AG04449 (cell line): ENCODE measurements at regions of chr5 and their contacts with region 1.

Region 1: GRCh38 chr5:135466178-135467050 is 14.3 kb upstream of the TIFAB start:
- DNase-seq: no peak
- H3K4me3 ChIP-seq: no peak overlapping the region
- CTCF ChIP-seq: peak; percentile 96

Region 2: DNA sequence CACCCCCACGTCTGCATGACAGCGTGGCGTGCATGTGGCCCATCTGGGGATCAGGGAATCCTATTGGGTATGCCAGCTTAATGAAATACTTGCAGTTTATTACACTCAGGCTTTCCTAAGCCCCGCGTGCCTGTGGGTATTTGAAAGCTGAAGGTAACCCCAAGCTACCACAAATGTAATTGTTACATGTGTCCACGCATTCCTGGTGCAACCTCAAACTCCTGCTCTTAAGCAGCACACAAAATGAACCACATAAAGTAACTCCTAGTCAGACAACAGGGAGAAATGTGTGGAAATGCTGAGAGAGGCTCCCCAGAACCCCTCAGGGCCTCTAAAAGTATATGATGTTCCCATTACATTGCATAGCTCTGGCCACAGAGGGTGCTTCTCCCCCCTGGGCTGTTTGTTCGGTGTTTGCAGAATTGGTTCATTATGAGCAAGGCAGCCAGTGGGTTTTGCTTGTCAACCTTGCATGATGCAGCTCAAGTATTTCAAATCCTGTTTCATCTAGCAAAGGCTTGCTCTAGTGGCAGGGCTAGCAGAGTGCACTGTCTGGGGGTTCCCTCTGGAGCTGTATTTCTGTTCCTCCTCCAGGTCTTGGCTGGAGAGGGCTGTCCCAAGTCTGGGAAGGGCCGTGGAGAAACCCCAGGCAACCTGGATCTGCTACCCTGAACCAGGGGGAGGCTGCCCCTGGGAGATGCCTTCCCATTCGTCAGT is 17.5 kb before region 1 on chr5:
- CTCF ChIA-PET with region 1: interaction called, 67 read pairs
- POLR2A ChIA-PET with region 1: no interaction called
- DNase-seq: no peak
- H3K4me3 ChIP-seq: no peak overlapping the region
- CTCF ChIP-seq: no peak

Region 3: GRCh38 chr5:135482381-135482933 is 16.0 kb after region 1 on chr5:
- CTCF ChIA-PET with region 1: interaction called, 114 read pairs
- POLR2A ChIA-PET with region 1: no interaction called
- DNase-seq: no peak
- H3K4me3 ChIP-seq: no peak overlapping the region
- CTCF ChIP-seq: no peak

Region 4: DNA sequence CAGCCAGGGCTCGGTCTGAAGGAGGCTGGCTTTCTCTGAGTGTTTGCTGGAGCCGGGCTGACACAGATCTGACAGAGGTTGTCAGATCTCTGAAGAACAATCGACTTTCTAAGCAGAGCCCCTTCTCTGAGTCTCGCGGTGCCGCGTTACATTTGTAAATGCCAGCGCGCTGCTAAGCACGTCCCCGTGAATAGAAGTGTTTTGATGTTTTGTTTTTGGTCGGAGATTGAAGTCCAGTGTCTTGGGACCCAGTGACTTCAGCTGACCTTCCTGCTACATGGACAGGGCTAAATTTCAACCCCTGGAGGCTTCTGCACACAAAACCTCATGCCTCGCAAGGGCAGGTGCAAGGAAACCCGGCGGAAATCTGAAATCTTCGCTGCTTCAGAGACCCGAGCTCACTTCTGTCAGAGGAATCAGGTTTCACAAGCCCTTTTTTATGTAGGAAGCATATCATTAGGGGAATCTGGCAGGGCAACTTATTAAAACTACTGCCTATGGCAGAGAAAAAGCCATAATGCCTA is 42.1 kb after region 1 on chr5:
- CTCF ChIA-PET with region 1: interaction called, 13 read pairs
- POLR2A ChIA-PET with region 1: no interaction called
- DNase-seq: no peak
- H3K4me3 ChIP-seq: no peak overlapping the region
- CTCF ChIP-seq: no peak

Region 5: DNA sequence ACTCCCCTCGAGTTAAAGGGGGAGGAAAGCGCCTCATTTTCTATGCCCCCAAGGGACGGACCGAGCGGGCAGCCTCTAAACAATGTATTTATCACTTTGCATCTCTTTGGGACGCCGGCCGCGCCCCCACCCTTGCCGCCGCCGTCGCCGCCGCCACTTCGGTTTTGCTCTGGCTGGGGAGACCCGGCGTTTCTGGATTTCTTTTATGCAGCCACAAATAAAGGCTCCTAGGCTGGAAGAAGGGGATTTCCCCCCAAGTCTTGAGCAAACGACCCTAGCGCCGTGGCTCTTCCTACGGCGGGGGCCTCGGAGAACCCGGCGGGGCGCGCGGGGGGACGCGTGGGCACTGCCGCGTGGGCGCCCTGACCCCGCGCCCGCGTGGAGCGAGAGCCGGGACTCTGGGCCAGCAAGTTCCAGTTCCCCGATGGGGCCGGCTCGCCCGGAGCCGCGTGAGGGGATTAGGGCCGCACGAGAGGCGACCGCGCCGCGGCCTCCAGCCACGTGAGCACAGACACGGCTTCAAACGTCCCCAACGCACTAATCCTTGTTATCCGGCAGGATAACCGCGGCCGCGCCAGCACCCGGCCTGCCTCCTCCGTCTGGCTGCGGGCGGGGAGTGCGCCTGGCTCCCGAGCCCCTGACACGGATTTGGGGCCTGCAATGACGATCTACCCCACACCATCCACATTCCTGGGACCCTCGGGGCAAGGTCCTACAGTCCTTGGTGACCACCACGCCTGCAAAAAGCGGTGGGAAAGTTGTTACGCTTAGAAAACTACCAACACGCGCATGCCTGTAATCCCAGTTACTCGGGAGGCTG is 77.3 kb after region 1 on chr5:
- CTCF ChIA-PET with region 1: interaction called, 2,422 read pairs
- POLR2A ChIA-PET with region 1: no interaction called
- DNase-seq: no peak
- H3K4me3 ChIP-seq: peak overlapping the region; percentile 32
- CTCF ChIP-seq: no peak

Region 6: GRCh38 chr5:135729321-135729786 is 262.9 kb after region 1 on chr5:
- CTCF ChIA-PET with region 1: interaction called, 14 read pairs
- POLR2A ChIA-PET with region 1: interaction called, 3 read pairs
- DNase-seq: no peak
- H3K4me3 ChIP-seq: no peak overlapping the region
- CTCF ChIP-seq: peak; percentile 6